A673 (cell line): ENCODE measurements at regions of chr7 and their contacts with region 1.

Region 1: DNA sequence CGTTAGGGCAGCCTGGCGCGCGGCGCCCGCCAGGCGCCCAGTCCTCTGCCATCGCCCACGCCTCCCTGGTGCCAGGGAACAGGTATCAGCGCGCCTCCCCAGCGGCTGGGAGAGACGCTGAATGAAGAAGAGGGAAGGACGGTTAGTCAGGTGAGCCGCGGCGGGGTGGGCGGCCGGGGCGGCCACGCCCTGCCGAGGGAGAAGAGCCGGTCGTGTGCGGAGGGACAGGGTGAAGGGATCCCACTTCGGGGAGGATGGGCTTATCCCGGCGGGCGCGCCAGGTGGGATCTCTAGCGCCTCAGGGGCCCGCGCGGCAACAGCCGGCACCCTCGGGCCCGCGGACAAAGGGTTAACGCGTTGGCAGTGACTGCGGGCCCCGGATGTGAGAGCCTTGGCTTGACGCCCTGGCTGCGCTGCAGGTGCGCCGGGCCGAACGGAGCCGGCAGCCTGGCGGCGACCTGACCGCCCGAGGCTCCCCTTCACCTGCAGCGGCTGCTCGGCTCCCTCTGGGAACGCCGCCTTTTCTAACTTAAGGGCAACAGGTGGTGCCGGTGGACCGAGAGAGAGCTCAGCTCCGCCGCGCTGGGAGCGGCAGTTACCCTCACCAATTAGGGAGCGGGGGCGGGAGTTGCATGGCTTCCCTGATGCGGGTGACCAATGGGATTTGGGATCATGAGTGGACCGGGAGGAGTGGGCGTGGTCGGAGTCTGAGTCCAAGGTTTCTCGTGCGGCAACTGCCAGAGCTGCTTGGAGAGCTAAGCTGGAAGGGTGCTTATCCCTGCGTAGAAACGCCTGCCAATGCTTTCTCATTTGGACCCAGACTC is at the start of gene ARL4A:
- DNase-seq: peak; percentile 99
- H3K4me3 ChIP-seq: peak within 1 kb of the TSS; percentile 78
- H3K27ac ChIP-seq: peak within 1 kb of the TSS; percentile 82
- H3K4me1 ChIP-seq: peaks cover 11% of the 10 kb centered on the region
- H3K27me3 ChIP-seq: no peaks in the 10 kb centered on the region
- CTCF ChIP-seq: peak; percentile 57
- total RNA-seq, gene ARL4A: 15.9 and 18.3 TPM in 2 replicates

Region 2: DNA sequence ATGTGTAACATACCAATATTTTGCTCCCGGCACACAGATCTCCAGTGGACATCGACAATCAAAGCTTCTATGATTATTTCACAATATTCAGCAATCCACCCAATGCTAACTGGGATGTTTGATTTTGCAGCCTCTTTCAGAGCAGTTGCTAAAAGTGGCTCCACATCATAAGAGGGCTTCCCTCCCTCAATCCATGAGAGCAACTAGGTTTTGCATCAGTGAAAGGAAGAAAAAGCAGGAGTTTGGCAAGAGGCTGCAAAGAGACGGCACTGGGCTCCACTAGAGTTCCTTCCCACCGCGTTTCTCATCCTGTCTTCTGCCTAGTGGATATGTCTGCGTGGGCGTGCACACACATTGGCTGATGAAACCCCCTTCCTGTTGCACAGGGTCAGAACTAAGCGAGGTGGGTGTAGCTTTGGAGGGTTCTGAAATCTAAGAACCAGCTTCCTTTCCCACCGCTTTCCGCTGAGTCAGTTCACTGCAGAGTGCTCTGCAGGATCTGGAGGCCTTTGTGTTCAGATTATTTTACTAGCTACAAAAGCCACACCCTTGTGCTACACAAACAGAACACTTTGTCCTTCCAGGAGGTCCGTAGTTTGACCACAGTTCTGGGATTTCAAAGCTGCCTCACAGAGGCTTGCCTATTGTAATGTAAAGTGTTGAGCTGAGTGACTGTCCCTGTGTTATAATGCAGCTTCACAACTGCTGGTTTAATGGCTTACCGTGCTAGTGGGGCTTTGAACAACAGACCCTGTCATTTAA is 28.4 kb after region 1 on chr7:
- CTCF ChIA-PET with region 1: interaction called, 11 read pairs
- POLR2A ChIA-PET with region 1: interaction called, 4 read pairs
- intact Hi-C with region 1: no loop called
- DNase-seq: peak; percentile 96
- H3K4me3 ChIP-seq: peak overlapping the region; percentile 9
- H3K27ac ChIP-seq: peak overlapping the region; percentile 78
- H3K4me1 ChIP-seq: peaks cover 84% of the 10 kb centered on the region
- H3K27me3 ChIP-seq: no peaks in the 10 kb centered on the region
- CTCF ChIP-seq: no peak

Region 3: GRCh38 chr7:12805957-12806356 is 118.9 kb after region 1 on chr7:
- CTCF ChIA-PET with region 1: no interaction called
- POLR2A ChIA-PET with region 1: no interaction called
- intact Hi-C with region 1: loop called (anchors 5 kb)
- DNase-seq: peak; percentile 37
- H3K4me3 ChIP-seq: no peak overlapping the region
- H3K27ac ChIP-seq: peak overlapping the region; percentile 47
- H3K4me1 ChIP-seq: peaks cover 9% of the 10 kb centered on the region
- H3K27me3 ChIP-seq: no peaks in the 10 kb centered on the region
- CTCF ChIP-seq: no peak

Region 4: GRCh38 chr7:13117103-13117502 is 430.0 kb after region 1 on chr7:
- CTCF ChIA-PET with region 1: no interaction called
- POLR2A ChIA-PET with region 1: no interaction called
- intact Hi-C with region 1: loop called (anchors 10 kb)
- DNase-seq: no peak
- H3K4me3 ChIP-seq: no peak overlapping the region
- H3K27ac ChIP-seq: no peak overlapping the region
- H3K4me1 ChIP-seq: no peaks in the 10 kb centered on the region
- H3K27me3 ChIP-seq: peaks cover 3% of the 10 kb centered on the region
- CTCF ChIP-seq: 0 out of 2 replicates have a peak, but pooled peaks have one; percentile 26

Region 5: DNA sequence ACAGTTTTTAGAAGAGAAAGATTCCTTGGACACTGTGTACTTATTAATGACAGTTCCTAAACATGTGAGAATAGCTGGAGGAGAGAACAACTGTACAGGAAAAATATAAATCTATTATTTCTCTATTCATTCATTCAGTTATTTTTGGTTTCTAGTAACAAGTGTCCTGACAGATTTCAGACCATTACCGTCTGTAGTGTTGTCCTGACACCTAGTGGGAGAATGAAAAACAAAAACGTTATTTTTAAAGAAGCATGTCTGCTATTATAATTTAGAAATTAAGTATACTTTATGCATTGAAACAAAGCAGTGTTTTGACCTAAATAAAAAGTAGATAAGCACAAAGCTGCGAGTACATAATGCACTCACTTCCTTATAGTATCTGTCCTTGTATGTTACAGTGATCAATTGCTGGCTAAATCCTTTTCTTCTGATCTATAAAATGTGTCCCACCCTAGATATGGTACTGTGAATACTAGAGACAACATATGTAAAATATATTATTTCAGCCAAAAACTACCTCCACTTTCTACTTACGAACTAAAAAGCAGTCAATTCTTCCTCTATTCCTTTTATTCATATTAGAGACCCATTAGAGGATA is 575.9 kb after region 1 on chr7:
- CTCF ChIA-PET with region 1: interaction called, 4 read pairs
- POLR2A ChIA-PET with region 1: no interaction called
- intact Hi-C with region 1: loop called (anchors 2 kb)
- DNase-seq: peak; percentile 52
- H3K4me3 ChIP-seq: no peak overlapping the region
- H3K27ac ChIP-seq: no peak overlapping the region
- H3K4me1 ChIP-seq: no peaks in the 10 kb centered on the region
- H3K27me3 ChIP-seq: peaks cover 7% of the 10 kb centered on the region
- CTCF ChIP-seq: peak; percentile 68